Prostate gland (tissue), 2 donors: ENCODE measurements at regions of chr2 and their contacts with region 1.

Region 1: GRCh38 chr2:231674587-231675338 is 33.6 kb upstream of the PTMA start:
- DNase-seq: peak; percentile 39
- H3K4me3 ChIP-seq: no peak overlapping the region
- H3K27ac ChIP-seq: peak overlapping the region; percentile 67 to 73
- H3K4me1 ChIP-seq: no peaks in the 10 kb centered on the region
- H3K27me3 ChIP-seq: no peaks in the 10 kb centered on the region
- CTCF ChIP-seq: peak; percentile 59 to 93 (median 78)
- POLR2A ChIP-seq: no peak

Region 2: DNA sequence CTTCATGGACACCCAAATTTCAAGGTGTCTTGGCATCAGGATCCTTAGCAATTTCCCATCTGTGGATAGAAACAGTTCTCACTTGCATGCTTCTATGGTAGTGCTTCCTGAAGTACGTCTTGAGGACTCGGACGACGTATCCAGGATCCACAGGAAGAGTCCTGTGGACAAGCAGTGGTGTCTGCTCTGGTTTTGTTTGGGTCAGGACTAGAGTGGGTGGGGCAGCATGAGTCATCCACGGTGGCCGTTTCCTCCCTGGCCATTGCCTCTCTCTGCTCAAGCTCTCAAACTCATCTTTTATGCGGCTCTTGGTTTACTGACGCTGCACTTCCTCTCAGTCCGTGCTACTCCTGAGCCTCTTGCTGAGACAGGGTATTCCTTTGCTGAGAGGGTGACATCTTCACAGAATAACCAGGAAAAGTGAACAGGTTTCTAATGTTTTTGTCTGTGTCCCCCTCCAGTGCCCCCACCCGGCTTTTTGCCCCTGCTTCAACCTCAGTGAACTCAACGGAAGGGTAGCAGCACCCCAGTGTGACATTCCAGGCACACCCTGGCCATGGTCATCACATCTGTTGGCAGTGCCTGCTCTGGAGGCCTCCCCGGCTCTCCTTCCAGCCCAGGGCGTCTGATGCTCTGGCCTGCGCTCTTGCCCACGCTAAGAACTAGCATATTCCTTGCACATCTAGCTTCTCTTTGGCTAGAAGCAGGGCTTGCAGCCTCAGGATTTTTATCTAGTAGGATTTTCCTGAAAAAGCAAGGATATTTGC is 414.1 kb before region 1 on chr2:
- intact Hi-C with region 1: no loop called
- DNase-seq: no peak
- H3K4me3 ChIP-seq: no peak overlapping the region
- H3K27ac ChIP-seq: no peak overlapping the region
- H3K4me1 ChIP-seq: no peaks in the 10 kb centered on the region
- H3K27me3 ChIP-seq: no peaks in the 10 kb centered on the region
- CTCF ChIP-seq: no peak
- POLR2A ChIP-seq: no peak

Region 3: DNA sequence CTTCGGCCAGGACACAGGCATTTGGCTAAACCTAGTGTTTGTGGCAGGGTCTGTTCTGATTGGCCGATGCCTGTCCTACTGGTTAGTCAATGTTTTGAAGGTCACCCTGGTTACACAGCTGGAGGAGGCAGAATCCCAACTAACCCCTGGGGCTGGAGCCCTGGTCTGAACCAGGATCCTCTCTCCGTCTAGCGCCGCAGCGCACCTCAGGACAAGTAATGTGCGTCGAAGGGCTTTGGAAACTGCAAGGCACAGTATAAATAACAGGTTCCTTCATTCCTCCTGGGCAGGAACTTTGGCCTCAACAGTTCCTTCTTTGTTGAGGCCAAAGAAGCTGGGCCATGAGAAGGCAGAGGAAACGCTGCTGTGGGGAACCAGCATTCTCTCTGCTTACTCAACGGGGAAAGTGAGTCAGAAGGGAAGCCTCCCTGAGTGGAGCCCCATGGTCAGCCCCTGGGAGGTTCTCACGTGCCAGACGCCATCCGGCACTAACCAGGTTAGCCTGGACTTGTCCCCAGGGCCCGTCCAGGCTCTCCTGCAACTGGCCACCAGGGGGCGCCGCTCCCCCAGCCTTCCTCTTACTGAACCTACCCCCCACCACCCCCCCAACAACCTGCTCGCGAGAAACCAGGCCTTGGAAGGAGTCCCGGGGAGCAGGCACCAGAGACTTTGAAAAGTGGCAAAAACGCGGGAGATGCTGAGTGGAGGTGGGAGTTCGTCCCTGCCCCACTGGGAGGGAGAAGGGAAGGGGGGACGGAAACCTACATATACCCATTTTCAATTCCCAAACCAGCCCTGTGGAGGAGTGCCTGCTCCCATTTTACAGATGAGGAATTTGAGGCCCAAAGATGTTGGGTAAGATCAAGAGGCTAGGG is 62.3 kb before region 1 on chr2:
- intact Hi-C with region 1: loop called (anchors 1 kb)
- DNase-seq: peak; percentile 92
- H3K4me3 ChIP-seq: no peak overlapping the region
- H3K27ac ChIP-seq: peak overlapping the region; percentile 95
- H3K4me1 ChIP-seq: peaks cover 9% of the 10 kb centered on the region
- H3K27me3 ChIP-seq: no peaks in the 10 kb centered on the region
- CTCF ChIP-seq: peak; percentile 96 to 99 (median 98)
- POLR2A ChIP-seq: no peak

Region 4: DNA sequence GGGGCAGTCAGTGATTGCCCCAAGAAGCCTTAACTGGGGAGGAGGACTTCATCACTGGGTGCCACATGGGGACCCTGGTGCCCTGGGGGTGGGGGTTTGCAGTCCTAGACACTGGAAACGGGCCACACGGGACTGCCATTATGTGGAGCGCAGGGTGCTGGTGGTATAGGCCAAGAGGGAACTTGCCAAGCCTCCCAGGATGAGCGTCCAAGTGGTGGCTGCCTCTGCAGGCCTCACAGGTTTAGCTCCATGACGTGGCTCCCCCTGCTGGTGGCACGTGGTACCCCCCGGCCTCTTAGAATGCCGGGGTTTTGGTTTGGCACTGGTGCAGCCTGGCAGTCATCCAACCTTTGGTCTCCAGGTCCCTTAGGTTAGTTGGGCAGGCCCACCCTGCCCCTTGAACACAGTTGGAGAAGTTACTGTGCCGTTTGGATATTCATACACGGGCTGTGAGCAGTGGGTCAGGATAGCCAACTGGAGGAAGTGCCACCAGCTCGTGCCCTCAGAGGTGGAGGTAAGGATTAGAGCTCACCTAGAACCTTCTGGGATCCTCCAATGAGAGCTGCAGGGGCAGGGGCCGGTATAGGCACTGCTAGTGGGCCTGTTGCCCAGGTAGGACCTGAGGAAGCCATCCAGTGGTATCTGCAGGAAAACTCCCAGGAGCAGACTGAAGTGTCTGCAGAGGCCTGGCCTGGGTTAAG is 39.1 kb after region 1 on chr2:
- intact Hi-C with region 1: loop called (anchors 1 kb)
- DNase-seq: peak; percentile 86
- H3K4me3 ChIP-seq: no peak overlapping the region
- H3K27ac ChIP-seq: peak overlapping the region; percentile 35 to 70
- H3K4me1 ChIP-seq: peaks cover 5% of the 10 kb centered on the region
- H3K27me3 ChIP-seq: no peaks in the 10 kb centered on the region
- CTCF ChIP-seq: peak; percentile 91 to 97 (median 96)
- POLR2A ChIP-seq: no peak